ENCODE measurements at regions of chr14 and their contacts with region 1.

Region 1: DNA sequence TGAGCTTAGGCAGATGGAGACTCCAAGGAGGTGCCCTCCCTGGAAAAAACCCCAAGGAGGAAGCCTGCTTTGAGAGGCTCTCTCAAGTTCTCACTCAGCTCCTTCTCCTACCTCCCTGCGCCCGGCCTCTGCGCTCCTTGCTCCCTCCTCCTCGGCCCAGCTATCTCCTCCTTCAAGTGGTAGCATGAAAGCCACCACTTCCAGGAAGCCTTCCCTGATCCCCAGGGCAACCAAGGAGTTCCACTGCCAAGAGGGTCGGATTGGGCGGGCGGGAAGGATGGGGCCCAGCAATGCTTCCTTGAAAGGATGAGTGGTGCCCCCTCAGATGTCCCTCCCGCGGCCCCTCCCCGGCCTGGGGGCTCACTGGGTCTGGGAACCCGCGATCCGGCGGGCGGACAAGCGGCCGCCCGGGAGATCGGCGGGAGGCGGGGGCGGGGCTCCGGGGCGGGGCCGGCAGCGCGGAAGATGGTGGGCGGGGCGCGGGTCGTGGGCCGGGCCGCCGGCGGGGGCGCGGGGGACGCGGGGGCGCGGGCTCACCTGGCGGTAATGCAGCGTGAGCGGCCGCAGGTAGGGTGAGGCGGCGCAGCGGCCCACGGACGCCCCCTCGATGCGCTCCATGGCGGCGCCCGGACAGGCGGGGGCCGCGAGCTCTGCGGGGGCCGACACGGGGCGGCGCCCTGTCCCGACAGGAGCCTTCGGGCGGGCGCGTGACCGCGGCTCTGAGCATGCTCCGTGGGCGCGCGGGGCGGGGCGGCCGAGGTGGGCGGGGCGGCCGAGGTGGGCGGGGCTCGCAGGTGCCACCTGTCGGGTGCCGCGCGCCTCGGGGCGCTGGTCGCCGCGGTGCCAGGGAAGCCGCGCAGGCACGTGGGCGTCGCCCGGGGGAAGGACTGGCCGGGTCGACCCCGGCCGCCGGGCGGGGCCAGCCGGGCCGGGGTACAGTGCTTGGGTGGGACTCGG is at the start of gene NUDT14:
- DNase-seq: peak; percentile 78
- ATAC-seq: peak; percentile 66
- H3K4me3 Mint-ChIP-seq: peak within 1 kb of the TSS; percentile 71
- H3K27ac Mint-ChIP-seq: no peak within 1 kb of the TSS
- H3K4me1 Mint-ChIP-seq: peaks cover 3% of the 10 kb centered on the region; the same call in 1 of the 2 replicates
- H3K27me3 Mint-ChIP-seq: peaks cover 24% of the 10 kb centered on the region
- CTCF ChIP-seq: no peak
- total RNA-seq, gene NUDT14: 35.4 to 56.2 TPM (median 51.3 TPM) in 3 replicates

Region 2: GRCh38 chr14:105080161-105080560 is 100.7 kb before region 1 on chr14:
- CTCF ChIA-PET with region 1: no interaction called
- POLR2A ChIA-PET with region 1: no interaction called
- DNase-seq: no peak
- ATAC-seq: no peak
- H3K4me3 Mint-ChIP-seq: no peak overlapping the region
- H3K27ac Mint-ChIP-seq: no peak overlapping the region
- H3K4me1 Mint-ChIP-seq: 0 out of 2 replicates have a peak, but pooled peaks cover 3% of the 10 kb centered on the region
- H3K27me3 Mint-ChIP-seq: peaks cover 23% of the 10 kb centered on the region
- CTCF ChIP-seq: no peak

Region 3: DNA sequence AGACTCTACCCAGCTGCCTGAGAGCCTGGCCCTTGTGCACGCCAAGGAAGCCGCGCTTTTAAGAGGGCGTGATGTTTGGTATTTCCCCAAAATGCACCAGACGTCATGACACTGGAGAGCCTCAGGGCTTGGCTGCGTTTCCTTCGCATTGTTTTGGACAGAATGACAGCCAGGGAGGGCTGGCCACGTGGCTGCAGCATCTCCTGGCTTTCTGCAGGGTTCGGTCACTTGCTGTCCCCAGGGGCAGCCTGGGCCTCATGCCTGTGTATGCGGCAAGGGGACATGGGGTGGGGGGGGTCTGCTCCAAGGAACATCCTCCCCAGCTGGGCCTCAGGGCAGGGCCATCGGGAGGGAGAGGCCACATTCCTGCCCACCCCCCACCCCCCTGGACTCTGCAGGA is 16.4 kb after region 1 on chr14:
- CTCF ChIA-PET with region 1: interaction called, 21 read pairs
- POLR2A ChIA-PET with region 1: no interaction called
- DNase-seq: no peak
- ATAC-seq: no peak
- H3K4me3 Mint-ChIP-seq: no peak overlapping the region
- H3K27ac Mint-ChIP-seq: no peak overlapping the region
- H3K4me1 Mint-ChIP-seq: peaks cover 9% of the 10 kb centered on the region
- H3K27me3 Mint-ChIP-seq: peaks cover 24% of the 10 kb centered on the region
- CTCF ChIP-seq: no peak

Region 4: DNA sequence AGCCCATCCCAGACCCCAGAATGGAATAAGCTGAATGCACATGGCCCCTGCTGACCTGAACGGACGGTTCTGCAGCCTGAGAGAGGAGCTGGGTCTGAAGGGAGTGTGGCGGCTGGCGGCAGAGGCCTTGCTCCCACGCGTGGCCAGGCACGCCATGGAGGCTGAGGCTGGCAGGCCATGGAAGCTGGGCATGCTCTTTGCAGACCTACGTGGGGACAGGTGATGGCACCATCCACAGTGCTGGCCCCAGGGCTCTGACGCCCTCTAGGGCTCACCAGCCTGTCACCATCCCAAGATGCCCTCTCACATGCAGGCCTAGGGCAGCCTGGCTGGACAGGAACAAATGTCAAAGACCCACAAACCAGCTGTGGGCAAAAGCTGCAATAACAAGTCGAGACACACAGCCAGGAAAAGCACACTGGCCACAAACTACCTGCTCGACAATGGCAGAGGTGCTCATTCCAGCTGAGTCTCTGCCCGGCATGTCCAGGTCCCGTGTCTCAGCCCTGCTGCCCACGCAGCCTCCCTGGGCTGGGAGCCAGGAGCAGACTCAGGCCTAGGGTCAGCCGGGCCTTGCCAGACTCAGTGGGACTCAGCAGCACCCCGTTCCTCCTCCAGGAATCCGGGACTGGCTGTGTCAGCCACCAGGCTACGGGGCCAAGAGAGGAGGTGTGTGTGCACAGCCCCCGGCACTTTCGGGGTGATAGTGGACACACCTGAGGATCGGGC is 87.1 kb after region 1 on chr14:
- CTCF ChIA-PET with region 1: no interaction called
- POLR2A ChIA-PET with region 1: no interaction called
- DNase-seq: no peak
- ATAC-seq: peak; percentile 68
- H3K4me3 Mint-ChIP-seq: no peak overlapping the region
- H3K27ac Mint-ChIP-seq: no peak overlapping the region
- H3K4me1 Mint-ChIP-seq: no peaks in the 10 kb centered on the region
- H3K27me3 Mint-ChIP-seq: no peaks in the 10 kb centered on the region
- CTCF ChIP-seq: no peak

Region 5: GRCh38 chr14:105436891-105437722 is 256.2 kb after region 1 on chr14:
- CTCF ChIA-PET with region 1: no interaction called
- POLR2A ChIA-PET with region 1: no interaction called
- DNase-seq: no peak
- ATAC-seq: no peak
- H3K4me3 Mint-ChIP-seq: no peak overlapping the region
- H3K27ac Mint-ChIP-seq: no peak overlapping the region
- H3K4me1 Mint-ChIP-seq: peaks cover 14% of the 10 kb centered on the region
- H3K27me3 Mint-ChIP-seq: no peaks in the 10 kb centered on the region
- CTCF ChIP-seq: no peak

Measured in WTC11 (cell line).